Activated CD4-positive, alpha-beta memory T cell treated with anti-CD3 and anti-CD28 coated beads, Interleukin-2, amount 10 ng/mL, durations not matched to agents 7 days and 5 days (primary cell): ENCODE measurements at regions of chr22 and their contacts with region 1.

Region 1: GRCh38 chr22:23240639-23241389 is 60.5 kb downstream of the BCR start:
- DNase-seq: peak; percentile 40
- H3K4me3 Mint-ChIP-seq: no peak overlapping the region
- H3K27ac Mint-ChIP-seq: peak overlapping the region; percentile 63
- H3K4me1 Mint-ChIP-seq: peaks cover 76% of the 10 kb centered on the region
- H3K27me3 Mint-ChIP-seq: no peaks in the 10 kb centered on the region

Region 2: GRCh38 chr22:22870577-22871404 is 370.0 kb before region 1 on chr22:
- CTCF ChIA-PET with region 1: no interaction called
- POLR2A ChIA-PET with region 1: no interaction called
- DNase-seq: peak; percentile 15
- H3K4me3 Mint-ChIP-seq: no peak overlapping the region
- H3K27ac Mint-ChIP-seq: no peak overlapping the region
- H3K4me1 Mint-ChIP-seq: peaks cover 11% of the 10 kb centered on the region
- H3K27me3 Mint-ChIP-seq: peaks cover 45% of the 10 kb centered on the region

Region 3: GRCh38 chr22:23098718-23099530 is 141.9 kb before region 1 on chr22:
- CTCF ChIA-PET with region 1: no interaction called
- POLR2A ChIA-PET with region 1: no interaction called
- DNase-seq: no peak
- H3K4me3 Mint-ChIP-seq: no peak overlapping the region
- H3K27ac Mint-ChIP-seq: no peak overlapping the region
- H3K4me1 Mint-ChIP-seq: no peaks in the 10 kb centered on the region
- H3K27me3 Mint-ChIP-seq: no peaks in the 10 kb centered on the region

Region 4: GRCh38 chr22:23163665-23164064 is 77.1 kb before region 1 on chr22:
- CTCF ChIA-PET with region 1: no interaction called
- POLR2A ChIA-PET with region 1: no interaction called
- DNase-seq: no peak
- H3K4me3 Mint-ChIP-seq: no peak overlapping the region
- H3K27ac Mint-ChIP-seq: no peak overlapping the region
- H3K4me1 Mint-ChIP-seq: no peaks in the 10 kb centered on the region
- H3K27me3 Mint-ChIP-seq: no peaks in the 10 kb centered on the region

Region 5: DNA sequence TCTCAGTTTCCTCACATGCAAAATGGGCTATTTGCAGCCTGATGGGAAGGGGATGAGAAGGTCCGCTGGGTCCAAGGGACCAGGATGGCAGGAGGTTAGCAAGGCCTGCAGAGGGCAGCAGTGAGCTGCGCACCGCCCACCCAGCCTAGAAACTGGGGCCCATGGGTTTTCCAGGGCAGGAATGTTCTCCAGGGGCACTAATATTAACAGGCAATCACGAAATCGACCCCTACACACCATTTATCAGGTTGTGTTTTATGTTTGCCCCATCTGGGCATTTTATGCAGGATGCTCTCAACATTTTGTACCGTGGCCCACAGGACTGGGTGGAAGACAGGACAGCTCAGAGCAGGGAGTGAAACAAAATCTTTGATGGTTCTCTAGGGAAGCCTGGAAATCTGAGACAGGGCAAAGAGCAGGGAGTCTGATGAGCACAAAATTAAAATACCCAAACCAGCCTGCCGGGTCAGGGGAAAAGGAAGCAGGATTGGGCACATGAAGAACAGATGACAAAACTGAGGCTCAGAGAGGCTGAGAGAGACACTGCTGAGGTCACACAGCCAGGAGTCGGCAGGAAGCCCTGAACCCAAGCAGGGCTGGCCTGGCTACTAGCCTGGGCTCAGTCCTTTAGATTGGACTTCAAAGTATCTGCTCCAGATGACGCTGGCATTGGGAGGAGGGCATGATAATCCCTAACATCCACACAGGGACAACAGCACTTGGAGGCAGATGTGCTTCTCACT is 62.1 kb before region 1 on chr22:
- CTCF ChIA-PET with region 1: interaction called, 4 read pairs
- POLR2A ChIA-PET with region 1: interaction called, 25 read pairs
- DNase-seq: peak; percentile 64
- H3K4me3 Mint-ChIP-seq: no peak overlapping the region
- H3K27ac Mint-ChIP-seq: peak overlapping the region; percentile 18
- H3K4me1 Mint-ChIP-seq: peaks cover 63% of the 10 kb centered on the region
- H3K27me3 Mint-ChIP-seq: peaks cover 2% of the 10 kb centered on the region

Region 6: DNA sequence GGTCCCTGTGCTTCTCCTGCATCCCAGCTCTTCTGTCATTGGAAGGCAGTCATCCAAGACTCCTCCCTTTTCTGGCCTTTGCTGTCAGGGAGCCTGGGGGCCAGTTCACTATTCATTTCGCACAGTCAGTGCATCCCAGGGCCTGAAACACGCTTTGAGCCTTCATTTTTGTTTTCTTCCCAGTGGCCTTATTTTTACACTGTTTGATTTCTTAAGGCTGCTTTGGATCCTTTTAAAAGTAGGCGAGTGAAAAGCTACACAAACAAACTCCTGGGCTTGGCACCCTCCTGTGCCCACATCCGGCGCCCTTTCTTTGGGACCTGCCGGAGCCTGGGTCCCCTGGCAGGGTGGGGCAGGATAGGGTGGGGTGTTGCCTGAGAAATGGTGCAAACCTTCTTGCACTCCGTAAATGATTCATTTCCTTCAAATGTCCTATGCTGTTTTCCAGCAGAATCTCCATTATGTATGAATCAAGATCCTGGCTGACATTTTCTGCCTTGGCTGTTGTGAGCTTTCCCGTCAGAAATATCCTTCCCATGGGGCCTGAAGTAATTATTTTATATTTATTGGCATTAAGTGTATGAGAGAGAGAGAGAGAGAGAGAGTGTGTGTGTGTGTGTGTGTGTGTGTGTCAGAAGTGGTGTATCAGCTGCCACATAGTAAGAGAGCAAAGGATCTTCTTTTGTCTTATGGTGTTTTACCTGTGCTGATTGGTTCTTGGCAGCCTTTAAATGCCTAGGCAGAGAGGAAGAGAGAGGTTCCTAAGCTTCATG is 14.9 kb before region 1 on chr22:
- CTCF ChIA-PET with region 1: interaction called, 11 read pairs
- POLR2A ChIA-PET with region 1: interaction called, 13 read pairs
- DNase-seq: peak; percentile 70
- H3K4me3 Mint-ChIP-seq: peak overlapping the region; percentile 43
- H3K27ac Mint-ChIP-seq: peak overlapping the region; percentile 89
- H3K4me1 Mint-ChIP-seq: peaks cover 76% of the 10 kb centered on the region
- H3K27me3 Mint-ChIP-seq: no peaks in the 10 kb centered on the region

Region 7: DNA sequence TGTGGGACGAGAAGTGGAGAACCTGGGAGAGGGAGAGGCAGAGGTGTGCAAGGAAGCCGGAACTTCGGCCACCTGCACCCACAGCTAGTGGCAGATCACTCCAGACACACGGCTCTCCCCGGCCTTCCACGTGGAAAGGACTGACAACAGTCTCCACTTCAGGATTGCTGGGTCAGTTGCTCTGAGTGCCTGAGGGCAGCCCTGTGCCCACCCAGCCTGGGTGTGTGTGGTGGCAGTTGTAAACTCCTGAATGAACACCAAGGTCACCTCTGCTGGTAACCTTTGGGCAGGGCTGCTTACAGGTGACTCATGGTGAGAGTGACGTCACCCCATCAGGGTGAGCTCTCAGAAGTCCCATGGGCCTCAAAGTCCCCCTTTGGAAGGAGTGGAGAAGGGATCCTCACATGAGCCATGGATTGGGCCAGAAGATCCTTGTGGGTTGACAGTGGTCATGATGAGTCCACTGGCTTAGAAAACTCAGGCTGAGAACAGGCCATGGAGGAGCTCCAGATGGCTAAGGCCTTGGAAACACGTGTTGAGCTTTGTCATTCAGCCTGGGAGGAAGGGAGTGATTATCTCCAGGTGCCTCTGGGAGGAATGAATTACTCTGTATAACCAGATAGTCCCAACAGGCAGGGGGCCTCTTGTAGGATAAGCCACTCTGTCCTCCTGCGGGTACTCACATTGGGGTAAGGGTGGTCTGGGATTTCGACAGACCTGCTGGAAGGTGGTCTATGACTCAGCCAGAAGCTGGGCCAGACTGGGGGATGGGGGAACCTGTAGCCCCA is 10.8 kb after region 1 on chr22:
- CTCF ChIA-PET with region 1: no interaction called
- POLR2A ChIA-PET with region 1: interaction called, 15 read pairs
- DNase-seq: no peak
- H3K4me3 Mint-ChIP-seq: no peak overlapping the region
- H3K27ac Mint-ChIP-seq: peak overlapping the region; percentile 3
- H3K4me1 Mint-ChIP-seq: peaks cover 51% of the 10 kb centered on the region
- H3K27me3 Mint-ChIP-seq: no peaks in the 10 kb centered on the region

Region 8: DNA sequence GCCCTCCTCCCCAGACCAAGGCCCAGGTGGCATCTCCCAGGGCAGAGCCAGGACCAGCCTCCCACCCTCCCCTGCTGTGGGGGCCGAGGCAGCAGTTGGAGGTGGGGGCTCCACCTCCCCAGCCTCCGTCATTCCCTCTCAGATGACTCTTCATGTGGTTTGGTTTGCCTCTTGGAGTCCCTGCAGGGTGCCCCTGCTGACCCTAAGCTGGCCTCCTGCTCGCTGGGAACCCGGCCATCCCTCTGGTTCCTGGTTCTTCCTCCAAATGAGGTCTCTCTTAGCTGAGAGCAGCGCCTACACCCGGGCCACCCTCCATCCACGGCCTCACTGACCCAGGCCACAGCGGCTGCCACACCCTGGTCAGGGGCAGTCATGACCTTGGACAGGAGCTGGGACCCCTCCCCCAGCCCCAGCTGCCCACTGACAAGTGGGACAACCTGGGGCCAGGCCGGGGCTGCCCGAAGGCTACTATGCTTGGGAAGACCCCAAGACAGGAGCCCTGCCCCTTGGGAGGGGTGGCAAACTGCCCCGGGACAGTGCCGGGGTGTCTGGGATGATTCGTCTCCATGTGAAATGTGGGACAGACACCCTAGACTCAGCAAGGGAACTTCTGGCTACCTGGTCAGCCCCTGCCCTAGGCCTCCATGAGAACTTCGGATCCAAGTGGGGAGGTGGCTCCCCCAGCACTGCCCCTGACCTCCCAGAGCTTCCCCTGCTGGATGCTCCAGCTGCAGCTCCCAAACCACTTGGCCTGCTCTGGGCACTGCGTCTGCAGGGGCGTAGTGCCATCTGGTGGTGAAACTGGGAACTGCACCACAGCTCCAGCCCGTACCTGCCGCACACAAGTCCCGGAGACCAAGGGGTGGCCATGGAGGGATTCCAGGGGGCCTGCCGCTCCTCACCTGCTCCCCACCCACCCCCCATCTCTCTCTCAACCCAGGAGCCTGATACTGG is 144.8 kb after region 1 on chr22:
- CTCF ChIA-PET with region 1: no interaction called
- POLR2A ChIA-PET with region 1: no interaction called
- DNase-seq: peak; percentile 82
- H3K4me3 Mint-ChIP-seq: no peak overlapping the region
- H3K27ac Mint-ChIP-seq: no peak overlapping the region
- H3K4me1 Mint-ChIP-seq: no peaks in the 10 kb centered on the region
- H3K27me3 Mint-ChIP-seq: no peaks in the 10 kb centered on the region